ENCODE measurements at regions of chr16 and their contacts with region 1.

Region 1: DNA sequence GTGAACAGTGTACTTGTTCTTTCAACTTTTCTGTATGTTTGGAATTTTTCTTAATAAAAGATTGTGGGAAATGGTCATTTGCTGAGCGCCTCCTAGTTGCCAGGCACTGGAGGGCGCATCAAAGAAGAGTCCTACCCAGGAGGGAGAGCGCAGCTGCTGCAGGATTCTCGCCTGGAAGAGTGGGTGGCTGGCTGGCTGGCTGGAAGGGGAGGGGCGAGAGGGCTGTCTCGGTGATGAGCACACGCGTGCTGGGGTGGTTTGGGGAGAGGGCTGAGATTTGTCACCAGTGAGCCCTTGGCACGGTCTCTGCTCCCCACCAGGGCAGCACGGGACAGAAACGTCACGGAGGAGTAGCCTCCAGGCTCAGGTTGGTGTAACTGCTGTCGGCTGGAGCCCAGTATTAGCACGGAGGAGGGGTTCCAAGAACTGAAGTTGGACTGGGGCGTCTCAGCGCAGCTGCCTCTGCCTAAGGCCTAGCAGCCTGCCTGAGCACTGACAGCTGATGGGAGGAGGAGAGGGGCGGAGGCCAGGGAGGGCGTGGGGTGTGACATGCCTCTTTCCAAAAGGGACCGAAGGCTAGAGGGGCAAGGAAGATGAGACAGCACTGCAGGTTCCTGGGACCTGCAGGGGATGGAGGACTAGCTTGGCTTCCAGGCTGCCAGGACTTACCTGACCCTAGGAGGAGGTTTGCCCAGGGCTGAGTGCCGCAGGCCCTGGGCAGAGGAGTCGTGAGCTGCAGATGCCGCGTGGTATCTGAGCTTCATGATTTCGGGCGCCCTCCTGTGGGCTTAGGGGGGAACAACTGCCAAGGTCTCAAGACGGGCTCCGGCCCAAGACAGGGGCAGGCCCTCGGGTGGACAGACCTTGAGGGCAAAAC is 5.7 kb downstream of the LDHD start:
- DNase-seq: peak; percentile 86 to 91 (median 91)
- H3K4me3 ChIP-seq: peak overlapping the region in 3 of 7 experiments; percentile 8 to 59 (median 43)
- H3K27ac ChIP-seq: peak overlapping the region; percentile 20 to 61
- H3K4me1 ChIP-seq: peaks cover 5 to 90% (median 83%) of the 10 kb centered on the region in 4 experiments
- H3K27me3 ChIP-seq: no peaks in the 10 kb centered on the region

Region 2: GRCh38 chr16:74950165-74950915 is 160.5 kb before region 1 on chr16:
- CTCF ChIA-PET with region 1: no interaction called
- POLR2A ChIA-PET with region 1: no interaction called
- DNase-seq: no peak
- H3K4me3 ChIP-seq: no peak overlapping the region
- H3K27ac ChIP-seq: no peak overlapping the region
- H3K4me1 ChIP-seq: no peaks in the 10 kb centered on the region
- H3K27me3 ChIP-seq: no peaks in the 10 kb centered on the region

Region 3: DNA sequence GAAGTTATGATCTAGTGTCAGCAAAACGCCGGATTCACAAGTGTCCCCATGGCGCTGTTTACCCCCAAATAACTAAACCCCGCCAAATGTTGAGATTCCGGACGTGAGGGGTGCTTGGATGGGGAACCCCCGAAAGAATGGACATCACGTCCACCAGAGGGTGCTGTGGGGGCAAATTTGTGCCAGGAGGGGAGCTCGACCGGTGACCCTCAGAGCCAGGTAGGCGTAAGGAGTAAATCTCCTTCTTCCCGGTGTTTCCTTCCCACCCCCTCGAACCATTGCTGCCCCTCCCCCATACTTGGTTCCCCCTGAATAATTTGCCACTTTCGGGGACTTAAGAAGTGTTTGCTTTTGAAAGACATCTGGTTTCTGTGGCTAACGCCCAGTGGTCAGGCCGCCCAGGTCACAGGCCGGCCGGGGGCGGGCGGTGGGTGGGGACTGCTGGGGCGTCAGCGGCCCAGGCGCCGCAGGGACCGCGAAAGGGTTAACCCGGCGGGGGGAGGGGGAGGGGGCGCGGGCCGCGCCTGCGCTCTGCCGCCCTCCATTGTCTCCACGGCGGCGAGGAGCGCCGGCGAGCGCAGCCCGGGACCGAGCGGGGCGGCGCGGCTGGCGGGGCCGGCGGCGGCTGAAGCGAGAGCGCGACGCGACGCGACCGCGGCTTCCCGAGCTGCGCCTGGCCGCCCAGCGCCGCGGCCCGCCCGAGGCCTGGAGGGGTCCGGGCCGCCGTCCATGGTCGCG is 112.2 kb before region 1 on chr16 and contains the start of gene ZNRF1:
- CTCF ChIA-PET with region 1: interaction called, 105 read pairs
- POLR2A ChIA-PET with region 1: interaction called, 27 read pairs
- DNase-seq: peak; percentile 91 to 95 (median 94)
- H3K4me3 ChIP-seq: peak within 1 kb of the TSS; percentile 86 to 100 (median 93)
- H3K27ac ChIP-seq: peak within 1 kb of the TSS; percentile 57 to 85
- H3K4me1 ChIP-seq: peaks cover 19 to 53% (median 32%) of the 10 kb centered on the region in 4 experiments
- H3K27me3 ChIP-seq: no peaks in the 10 kb centered on the region

Region 4: DNA sequence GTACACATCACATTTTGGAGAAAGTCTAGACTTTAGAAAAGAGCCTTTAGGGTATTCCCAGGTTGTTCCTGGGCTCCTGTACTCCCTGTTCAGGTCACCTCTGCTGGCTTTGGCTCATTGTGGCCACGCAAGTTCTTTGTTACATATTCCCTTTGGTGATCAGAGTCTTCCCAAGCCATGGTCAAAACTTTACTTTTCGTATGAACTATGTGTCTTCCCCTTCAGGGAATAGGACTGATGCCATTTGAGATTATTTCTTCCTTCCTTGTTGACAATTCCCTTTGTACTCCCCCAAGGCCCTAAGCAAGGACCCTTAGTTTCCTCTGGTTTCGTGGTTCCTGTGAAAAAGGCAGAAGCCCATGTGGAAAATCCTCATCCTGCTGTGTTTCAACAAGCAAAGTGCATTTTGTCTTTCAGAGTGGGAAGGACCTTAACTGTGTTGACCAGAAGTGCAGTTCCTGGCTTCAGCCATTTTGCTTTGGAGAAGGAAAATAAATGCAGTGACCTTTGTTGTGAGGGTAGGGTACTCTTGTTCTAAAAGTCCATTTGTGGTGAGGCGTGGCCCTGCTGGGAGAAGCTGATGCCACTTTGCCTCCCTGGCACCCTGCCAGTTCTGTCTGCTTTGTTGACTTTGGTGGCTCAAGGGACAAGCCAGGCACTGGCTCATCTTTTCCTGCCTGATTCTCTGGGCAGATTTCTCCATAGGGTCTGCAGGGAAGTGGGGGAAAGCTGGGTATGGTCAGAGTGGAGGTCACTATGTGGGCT is 56.9 kb before region 1 on chr16:
- CTCF ChIA-PET with region 1: interaction called, 25 read pairs
- POLR2A ChIA-PET with region 1: no interaction called
- DNase-seq: peak in 2 of 3 donors; percentile 58 to 61
- H3K4me3 ChIP-seq: peak overlapping the region in 1 of 7 experiments; percentile 16
- H3K27ac ChIP-seq: peak overlapping the region; percentile 22 to 60
- H3K4me1 ChIP-seq: peaks cover 26 to 79% (median 57%) of the 10 kb centered on the region in 4 experiments
- H3K27me3 ChIP-seq: no peaks in the 10 kb centered on the region

Region 5: DNA sequence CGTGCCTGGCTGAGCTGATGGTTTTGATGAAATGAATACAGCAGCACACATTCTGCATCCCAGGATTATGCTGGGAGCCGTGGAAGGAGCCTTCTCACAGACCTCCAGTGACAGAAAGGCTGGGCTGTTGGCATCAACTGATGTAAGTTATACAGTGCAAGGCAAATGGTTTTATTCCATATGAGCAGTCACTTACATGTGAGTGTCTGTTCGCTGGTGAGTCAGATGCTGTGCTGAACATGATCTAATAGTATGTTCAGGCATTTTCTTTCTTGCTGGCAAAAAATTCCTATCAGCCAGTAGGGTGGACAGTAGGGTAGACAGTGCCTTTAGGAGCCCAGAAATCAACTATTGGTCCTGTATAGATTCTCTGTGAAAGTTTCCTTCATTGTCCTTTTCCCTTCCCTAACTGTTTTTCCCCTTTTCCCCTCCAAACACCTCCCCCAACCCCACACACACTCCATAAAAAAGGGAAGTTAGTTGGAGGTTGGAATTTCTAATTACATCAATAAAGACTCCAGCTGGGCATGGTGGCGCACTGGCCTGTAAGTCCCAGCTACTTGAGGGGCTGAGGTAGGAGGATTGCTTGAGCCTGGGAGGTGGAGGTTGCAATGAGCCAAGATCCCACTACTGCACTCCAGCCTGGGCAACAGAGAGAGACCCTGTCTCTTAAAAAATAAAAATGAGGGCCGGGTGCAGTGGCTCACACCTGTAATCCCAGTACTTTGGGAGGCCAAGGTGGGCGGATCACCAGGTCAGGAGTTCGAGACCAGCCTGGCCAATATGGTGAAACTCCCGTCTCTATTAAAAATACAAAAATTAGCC is 30.5 kb before region 1 on chr16:
- CTCF ChIA-PET with region 1: interaction called, 62 read pairs
- POLR2A ChIA-PET with region 1: interaction called, 28 read pairs
- DNase-seq: peak in 2 of 3 donors; percentile 54 to 63
- H3K4me3 ChIP-seq: no peak overlapping the region
- H3K27ac ChIP-seq: peak overlapping the region; percentile 6 to 62
- H3K4me1 ChIP-seq: peaks cover 24 to 97% (median 80%) of the 10 kb centered on the region in 4 experiments
- H3K27me3 ChIP-seq: no peaks in the 10 kb centered on the region

Region 6: GRCh38 chr16:75121949-75122568 is 11.2 kb after region 1 on chr16:
- CTCF ChIA-PET with region 1: interaction called, 28 read pairs
- POLR2A ChIA-PET with region 1: interaction called, 3 read pairs
- DNase-seq: peak in 1 of 3 donors; percentile 37
- H3K4me3 ChIP-seq: no peak overlapping the region
- H3K27ac ChIP-seq: no peak overlapping the region
- H3K4me1 ChIP-seq: no peaks in the 10 kb centered on the region
- H3K27me3 ChIP-seq: no peaks in the 10 kb centered on the region

Region 7: GRCh38 chr16:75402821-75403475 is 292.1 kb after region 1 on chr16:
- CTCF ChIA-PET with region 1: no interaction called
- POLR2A ChIA-PET with region 1: no interaction called
- DNase-seq: peak; percentile 44 to 65 (median 58)
- H3K4me3 ChIP-seq: no peak overlapping the region
- H3K27ac ChIP-seq: no peak overlapping the region
- H3K4me1 ChIP-seq: peaks cover 0 to 10% (median 4%) of the 10 kb centered on the region in 4 experiments
- H3K27me3 ChIP-seq: no peaks in the 10 kb centered on the region